Natural killer cell (primary cell): ENCODE measurements at regions of chr12 and their contacts with region 1.

Region 1: DNA sequence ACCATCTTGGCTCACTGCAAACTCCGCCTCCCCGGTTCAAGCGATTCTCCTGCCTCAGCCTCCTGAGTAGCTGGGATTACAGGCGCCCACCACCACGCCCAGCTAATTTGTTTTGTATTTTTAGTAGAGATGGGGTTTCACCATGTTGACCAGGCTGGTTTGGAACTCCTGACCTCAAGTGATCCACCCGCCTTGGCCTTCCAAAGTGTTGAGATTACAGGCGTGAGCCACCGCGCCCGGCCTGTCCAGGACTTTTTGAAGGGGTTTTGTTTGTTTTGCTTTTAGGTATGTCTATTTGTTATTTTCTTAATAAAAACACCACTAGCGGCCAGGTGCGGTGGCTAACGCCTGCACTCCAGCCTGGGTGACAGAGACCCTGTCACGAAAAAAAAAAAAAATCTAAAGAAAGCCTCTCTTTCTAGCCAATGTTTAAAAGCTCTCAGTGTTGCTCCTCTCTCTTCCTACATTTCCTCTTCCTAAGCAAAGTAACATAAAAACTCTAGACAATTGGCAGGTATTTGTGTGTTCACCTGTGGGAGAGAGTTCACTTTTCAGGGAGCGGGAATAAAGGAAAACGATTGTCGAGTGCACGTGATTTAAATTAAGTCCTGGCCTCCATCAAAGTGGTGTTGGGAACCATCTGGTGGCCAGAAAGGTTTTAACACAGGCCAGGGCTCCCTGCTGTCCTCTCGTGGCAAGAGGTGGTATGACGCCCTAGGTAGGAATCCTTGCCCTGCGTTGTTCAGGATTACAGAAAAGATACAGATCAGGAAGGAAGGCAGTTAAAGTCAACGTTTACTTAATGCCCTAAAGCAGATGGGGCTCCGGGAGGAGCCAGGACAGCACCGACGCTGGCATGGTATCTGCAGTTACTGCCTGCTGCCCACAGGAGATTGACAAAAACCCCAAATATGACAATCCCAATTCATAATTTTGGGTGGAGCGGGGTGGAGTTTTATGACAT is 36.2 kb upstream of the ATP23 start:
- DNase-seq: peak; percentile 81 to 93
- ATAC-seq: peak; percentile 98 to 100 (median 100)
- H3K4me3 ChIP-seq: no peak overlapping the region
- H3K4me3 Mint-ChIP-seq: peak overlapping the region; percentile 50
- H3K27ac ChIP-seq: no peak overlapping the region
- H3K27ac Mint-ChIP-seq: peak overlapping the region in 1 of 2 donors; percentile 6
- H3K4me1 ChIP-seq: peaks cover 6% of the 10 kb centered on the region
- H3K4me1 Mint-ChIP-seq: peaks cover 6 to 7% of the 10 kb centered on the region in 2 donors
- H3K27me3 ChIP-seq: no peaks in the 10 kb centered on the region
- H3K27me3 Mint-ChIP-seq: peaks cover 27 to 36% of the 10 kb centered on the region in 2 donors
- CTCF ChIP-seq: peak; percentile 100

Region 2: DNA sequence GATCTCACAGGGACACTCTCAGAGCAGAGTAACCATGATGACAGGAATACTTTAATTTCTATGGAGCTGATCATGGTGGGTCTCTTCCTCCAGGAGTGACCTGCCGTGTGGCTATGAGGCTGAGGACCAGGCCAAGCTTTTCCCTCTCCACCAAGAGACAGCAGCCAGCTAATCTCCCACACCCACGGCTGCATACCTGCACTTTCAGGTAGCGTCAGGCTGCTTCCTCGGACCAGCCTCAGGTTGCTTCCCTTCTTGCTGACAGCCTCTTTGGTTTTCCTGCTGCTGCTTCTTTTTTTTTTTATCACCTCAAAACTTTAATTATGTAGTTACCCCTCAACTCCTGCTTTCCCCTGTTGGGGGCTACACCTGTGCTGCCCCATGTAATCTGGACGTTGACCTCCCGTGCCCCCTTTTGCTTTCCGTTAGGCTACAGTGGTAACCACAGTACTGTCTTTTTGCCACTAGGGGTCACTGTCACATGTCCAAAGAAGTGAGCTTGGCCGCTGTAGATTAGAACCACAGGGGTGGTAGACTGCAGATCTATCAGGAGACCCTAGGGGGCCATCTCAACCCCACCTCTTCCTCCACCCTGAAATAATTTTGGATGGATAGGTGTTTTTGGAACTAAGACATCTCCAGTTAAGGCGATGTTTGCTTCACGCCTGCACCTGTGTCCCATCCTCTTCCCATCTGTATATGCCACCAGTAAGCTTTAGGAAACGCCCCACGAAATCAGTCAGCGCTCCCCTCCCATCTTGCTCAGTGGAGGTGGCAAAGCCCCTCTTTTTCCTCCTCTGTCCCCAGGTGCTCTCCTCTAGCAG is 321.9 kb before region 1 on chr12:
- intact Hi-C with region 1: loop called (anchors 1 kb)
- DNase-seq: peak; percentile 45 to 90
- ATAC-seq: peak; percentile 99 to 100 (median 100)
- H3K4me3 ChIP-seq: no peak overlapping the region
- H3K4me3 Mint-ChIP-seq: no peak overlapping the region
- H3K27ac ChIP-seq: no peak overlapping the region
- H3K27ac Mint-ChIP-seq: peak overlapping the region in 1 of 2 donors; percentile 24
- H3K4me1 ChIP-seq: no peaks in the 10 kb centered on the region
- H3K4me1 Mint-ChIP-seq: peaks cover 8 to 9% of the 10 kb centered on the region in 2 donors
- H3K27me3 ChIP-seq: peaks cover 2% of the 10 kb centered on the region
- H3K27me3 Mint-ChIP-seq: peaks cover 13 to 20% of the 10 kb centered on the region in 2 donors
- CTCF ChIP-seq: peak; percentile 90

Region 3: GRCh38 chr12:57751788-57752667 is 153.1 kb before region 1 on chr12 and contains the start of gene CDK4:
- intact Hi-C with region 1: loop called (anchors 2 kb)
- DNase-seq: peak; percentile 96 to 99
- ATAC-seq: peak; percentile 81 to 97 (median 89)
- H3K4me3 ChIP-seq: peak within 1 kb of the TSS; percentile 63
- H3K4me3 Mint-ChIP-seq: peak within 1 kb of the TSS; percentile 89
- H3K27ac ChIP-seq: peak within 1 kb of the TSS; percentile 85
- H3K27ac Mint-ChIP-seq: peak within 1 kb of the TSS; percentile 91 to 92
- H3K4me1 ChIP-seq: peaks cover 43% of the 10 kb centered on the region
- H3K4me1 Mint-ChIP-seq: peaks cover 45 to 49% of the 10 kb centered on the region in 2 donors
- H3K27me3 ChIP-seq: no peaks in the 10 kb centered on the region
- H3K27me3 Mint-ChIP-seq: no peaks in the 10 kb centered on the region
- CTCF ChIP-seq: no peak
- total RNA-seq, gene CDK4: 30.7 to 39.5 (median 37.7) TPM

Region 4: DNA sequence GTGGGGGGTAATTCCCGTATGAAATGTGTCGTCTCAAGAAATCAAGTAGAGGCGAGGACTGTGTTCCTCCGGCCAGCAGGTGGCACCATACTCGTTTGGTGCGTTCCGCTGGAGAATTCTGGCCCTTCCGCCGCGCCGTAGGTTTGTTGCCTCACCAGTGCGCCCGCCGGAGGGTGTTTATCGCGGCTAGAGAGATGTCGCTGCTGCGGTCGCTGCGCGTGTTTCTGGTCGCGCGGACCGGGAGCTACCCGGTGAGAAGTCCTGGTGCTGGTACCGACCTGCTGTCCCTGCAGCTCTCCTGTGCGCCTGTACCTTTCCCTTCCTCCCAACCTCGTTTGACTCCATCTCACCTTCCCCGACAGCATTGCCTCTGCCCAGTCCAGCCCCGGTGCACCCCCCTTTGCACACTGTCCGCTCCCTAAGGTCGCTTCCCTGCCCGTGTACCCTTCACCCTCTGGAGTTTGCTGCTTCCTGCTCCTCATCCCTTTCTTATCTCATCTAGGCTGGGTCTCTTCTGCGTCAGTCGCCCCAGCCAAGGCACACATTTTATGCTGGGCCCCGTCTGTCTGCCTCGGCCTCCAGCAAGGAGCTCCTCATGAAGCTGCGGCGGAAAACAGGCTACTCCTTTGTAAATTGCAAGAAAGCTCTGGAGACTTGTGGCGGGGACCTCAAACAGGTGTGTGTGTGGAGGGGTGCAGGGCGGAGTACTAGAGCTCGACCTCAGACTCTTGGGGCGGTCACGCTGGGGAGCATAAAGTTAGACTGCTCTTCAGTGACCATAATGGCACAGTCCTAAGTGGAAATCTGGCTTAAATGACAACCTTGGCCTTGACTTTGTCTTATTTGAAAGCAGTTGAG is 122.3 kb before region 1 on chr12 and contains the start of gene TSFM:
- intact Hi-C with region 1: loop called (anchors 1 kb)
- DNase-seq: peak; percentile 98 to 99
- ATAC-seq: peak; percentile 94 to 97 (median 97)
- H3K4me3 ChIP-seq: peak within 1 kb of the TSS; percentile 86
- H3K4me3 Mint-ChIP-seq: peak within 1 kb of the TSS; percentile 99
- H3K27ac ChIP-seq: peak within 1 kb of the TSS; percentile 57
- H3K27ac Mint-ChIP-seq: peak within 1 kb of the TSS; percentile 90 to 97
- H3K4me1 ChIP-seq: peaks cover 36% of the 10 kb centered on the region
- H3K4me1 Mint-ChIP-seq: peaks cover 33 to 34% of the 10 kb centered on the region in 2 donors
- H3K27me3 ChIP-seq: no peaks in the 10 kb centered on the region
- H3K27me3 Mint-ChIP-seq: no peaks in the 10 kb centered on the region
- CTCF ChIP-seq: peak; percentile 93
- total RNA-seq, gene TSFM: 17.6 to 19.7 (median 17.7) TPM

Region 5: DNA sequence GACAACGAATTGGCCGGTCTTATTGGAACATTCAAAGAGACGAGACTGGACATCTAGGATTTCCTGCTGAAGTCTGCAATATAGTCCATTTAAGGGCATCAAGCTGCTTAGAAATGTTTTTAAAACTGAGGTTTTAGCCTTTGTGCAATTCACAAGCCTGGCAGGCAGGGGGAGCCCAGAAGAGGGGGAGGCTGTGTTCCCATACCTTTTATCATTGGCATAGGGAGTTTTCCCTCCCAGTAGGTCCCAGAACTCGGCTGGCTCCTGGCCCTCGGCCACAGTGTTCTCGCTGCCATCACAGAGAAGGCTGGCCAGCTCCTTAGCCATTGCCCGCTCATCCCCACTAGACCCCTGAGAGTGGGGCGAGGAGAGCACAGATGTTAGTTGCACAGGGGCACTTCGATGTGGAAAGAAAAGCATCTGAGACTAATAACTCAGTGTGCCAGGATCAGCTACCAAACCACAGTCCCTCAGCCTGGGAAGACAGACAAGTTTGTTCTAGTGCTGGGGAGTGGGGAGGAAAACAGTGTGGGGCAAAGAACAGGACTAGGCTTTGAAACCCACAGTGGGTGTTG is 101.7 kb before region 1 on chr12:
- intact Hi-C with region 1: loop called (anchors 1 kb)
- DNase-seq: peak in 1 of 2 donors; percentile 57
- ATAC-seq: no peak
- H3K4me3 ChIP-seq: no peak overlapping the region
- H3K4me3 Mint-ChIP-seq: no peak overlapping the region
- H3K27ac ChIP-seq: no peak overlapping the region
- H3K27ac Mint-ChIP-seq: no peak overlapping the region
- H3K4me1 ChIP-seq: no peaks in the 10 kb centered on the region
- H3K4me1 Mint-ChIP-seq: peaks cover 0 to 6% of the 10 kb centered on the region in 2 donors
- H3K27me3 ChIP-seq: no peaks in the 10 kb centered on the region
- H3K27me3 Mint-ChIP-seq: no peaks in the 10 kb centered on the region
- CTCF ChIP-seq: peak; percentile 63

Region 6: DNA sequence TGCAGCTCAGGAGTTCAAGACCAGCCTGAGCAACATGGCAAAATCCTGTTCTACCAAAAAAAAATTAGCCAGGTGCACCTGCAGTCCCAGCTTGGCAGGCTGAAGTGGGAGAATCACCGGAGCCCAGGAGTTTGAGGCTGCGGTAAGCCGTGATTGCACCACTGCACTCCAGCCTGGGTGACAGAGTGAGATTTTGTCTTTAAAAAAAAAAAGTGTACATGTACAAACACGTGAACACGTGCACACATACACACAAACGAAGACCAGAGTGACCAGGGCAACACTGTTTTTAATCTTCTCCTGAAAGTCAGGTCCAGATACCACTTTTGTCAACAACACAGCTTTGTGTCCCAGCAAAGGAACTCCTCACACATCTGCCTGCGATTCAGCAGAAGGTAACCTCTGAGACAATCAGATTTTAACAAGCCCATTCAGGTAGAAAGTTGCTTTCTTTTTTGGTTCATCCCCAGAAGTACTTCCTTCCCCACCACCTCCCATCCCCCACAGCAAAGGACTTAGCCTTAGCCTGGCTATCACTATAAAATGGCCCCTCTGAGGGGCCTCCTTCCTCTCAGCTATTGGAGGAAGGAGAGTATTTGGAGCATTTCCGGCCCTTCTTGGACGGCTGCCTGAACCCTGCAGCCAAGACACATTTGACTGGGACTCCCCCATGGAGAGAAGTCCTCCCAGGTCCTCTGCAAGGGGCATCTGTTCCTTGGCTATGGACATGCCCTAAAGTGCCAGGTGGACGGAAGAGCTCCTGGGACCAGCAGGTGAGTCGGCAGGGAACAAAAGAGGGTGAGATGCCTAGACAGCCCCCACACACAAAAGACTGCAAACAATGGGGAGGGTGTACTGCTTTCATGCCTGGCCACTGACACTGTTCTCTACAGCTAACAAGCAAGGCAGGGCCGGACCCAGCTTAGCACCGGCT is 68.4 kb before region 1 on chr12:
- intact Hi-C with region 1: loop called (anchors 1 kb)
- DNase-seq: peak in 1 of 2 donors; percentile 70
- ATAC-seq: peak; percentile 43 to 59 (median 50)
- H3K4me3 ChIP-seq: no peak overlapping the region
- H3K4me3 Mint-ChIP-seq: peak overlapping the region; percentile 62
- H3K27ac ChIP-seq: peak overlapping the region; percentile 52
- H3K27ac Mint-ChIP-seq: peak overlapping the region; percentile 85 to 95
- H3K4me1 ChIP-seq: peaks cover 94% of the 10 kb centered on the region
- H3K4me1 Mint-ChIP-seq: peaks cover 81 to 94% of the 10 kb centered on the region in 2 donors
- H3K27me3 ChIP-seq: no peaks in the 10 kb centered on the region
- H3K27me3 Mint-ChIP-seq: no peaks in the 10 kb centered on the region
- CTCF ChIP-seq: no peak

Region 7: GRCh38 chr12:58025431-58025830 is 120.3 kb after region 1 on chr12:
- intact Hi-C with region 1: no loop called
- DNase-seq: no peak
- ATAC-seq: no peak
- H3K4me3 ChIP-seq: no peak overlapping the region
- H3K4me3 Mint-ChIP-seq: no peak overlapping the region
- H3K27ac ChIP-seq: no peak overlapping the region
- H3K27ac Mint-ChIP-seq: no peak overlapping the region
- H3K4me1 ChIP-seq: no peaks in the 10 kb centered on the region
- H3K4me1 Mint-ChIP-seq: no peaks in the 10 kb centered on the region
- H3K27me3 ChIP-seq: no peaks in the 10 kb centered on the region
- H3K27me3 Mint-ChIP-seq: peaks cover 8 to 28% of the 10 kb centered on the region in 2 donors
- CTCF ChIP-seq: no peak